ENCODE measurements at regions of chr4 and their contacts with region 1.

Region 1: GRCh38 chr4:88211473-88212252 is 53.2 kb upstream of the ABCG2 start:
- DNase-seq: peak in 6 of 7 donors; percentile 31 to 70 (median 64)
- H3K4me3 ChIP-seq: no peak overlapping the region
- H3K27ac ChIP-seq: no peak overlapping the region
- H3K4me1 ChIP-seq: peaks cover 0 to 3% of the 10 kb centered on the region in 2 donors
- H3K27me3 ChIP-seq: no peaks in the 10 kb centered on the region
- CTCF ChIP-seq: peak; percentile 56 to 86 (median 79)
- POLR2A ChIP-seq: no peak

Region 2: GRCh38 chr4:87848622-87849351 is 362.9 kb before region 1 on chr4:
- intact Hi-C with region 1: loop called (anchors 5 to 10 kb)
- DNase-seq: peak; percentile 42 to 75 (median 58)
- H3K4me3 ChIP-seq: no peak overlapping the region
- H3K27ac ChIP-seq: no peak overlapping the region
- H3K4me1 ChIP-seq: peaks cover 11 to 12% of the 10 kb centered on the region in 2 donors
- H3K27me3 ChIP-seq: no peaks in the 10 kb centered on the region
- CTCF ChIP-seq: peak in 5 of 6 experiments; percentile 30 to 64 (median 61)
- POLR2A ChIP-seq: no peak

Region 3: DNA sequence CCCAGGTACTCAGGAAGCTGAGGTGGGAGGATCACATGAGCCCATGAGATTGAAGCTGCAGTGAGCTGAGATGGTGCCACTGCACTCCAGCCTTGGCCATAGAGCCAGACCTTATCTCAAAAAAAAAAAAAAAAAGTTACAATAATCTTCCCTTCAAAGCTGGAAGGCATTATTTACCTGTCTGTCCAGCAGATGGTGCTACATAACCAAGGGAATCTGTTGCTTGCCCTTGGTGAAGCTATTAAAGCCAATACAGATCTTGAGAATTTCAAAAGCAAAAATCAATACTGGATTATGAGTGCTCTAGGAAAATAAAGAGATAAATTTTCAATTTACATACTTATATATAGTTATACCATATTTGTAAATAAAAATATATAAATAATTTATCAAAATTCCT is 178.4 kb before region 1 on chr4:
- intact Hi-C with region 1: loop called (anchors 5 to 10 kb)
- DNase-seq: peak; percentile 24 to 66 (median 59)
- H3K4me3 ChIP-seq: no peak overlapping the region
- H3K27ac ChIP-seq: no peak overlapping the region
- H3K4me1 ChIP-seq: peaks cover 11 to 12% of the 10 kb centered on the region in 2 donors
- H3K27me3 ChIP-seq: no peaks in the 10 kb centered on the region
- CTCF ChIP-seq: peak; percentile 57 to 85 (median 66)
- POLR2A ChIP-seq: no peak

Region 4: GRCh38 chr4:88378691-88379559 is 167.3 kb after region 1 on chr4 and contains the start of gene HERC6:
- intact Hi-C with region 1: loop called in 1 of 2 experiments (anchors 10 kb)
- DNase-seq: peak; percentile 79 to 94 (median 87)
- H3K4me3 ChIP-seq: peak within 1 kb of the TSS; percentile 69 to 100 (median 84)
- H3K27ac ChIP-seq: peak within 1 kb of the TSS; percentile 87 to 100 (median 94)
- H3K4me1 ChIP-seq: peaks cover 0 to 3% of the 10 kb centered on the region in 2 donors
- H3K27me3 ChIP-seq: no peaks in the 10 kb centered on the region
- CTCF ChIP-seq: peak; percentile 47 to 89 (median 73)
- POLR2A ChIP-seq: peak in 1 of 2 donors; percentile 40
- total RNA-seq, gene HERC6: 4.1 to 15.9 (median 12.4) TPM

Region 5: DNA sequence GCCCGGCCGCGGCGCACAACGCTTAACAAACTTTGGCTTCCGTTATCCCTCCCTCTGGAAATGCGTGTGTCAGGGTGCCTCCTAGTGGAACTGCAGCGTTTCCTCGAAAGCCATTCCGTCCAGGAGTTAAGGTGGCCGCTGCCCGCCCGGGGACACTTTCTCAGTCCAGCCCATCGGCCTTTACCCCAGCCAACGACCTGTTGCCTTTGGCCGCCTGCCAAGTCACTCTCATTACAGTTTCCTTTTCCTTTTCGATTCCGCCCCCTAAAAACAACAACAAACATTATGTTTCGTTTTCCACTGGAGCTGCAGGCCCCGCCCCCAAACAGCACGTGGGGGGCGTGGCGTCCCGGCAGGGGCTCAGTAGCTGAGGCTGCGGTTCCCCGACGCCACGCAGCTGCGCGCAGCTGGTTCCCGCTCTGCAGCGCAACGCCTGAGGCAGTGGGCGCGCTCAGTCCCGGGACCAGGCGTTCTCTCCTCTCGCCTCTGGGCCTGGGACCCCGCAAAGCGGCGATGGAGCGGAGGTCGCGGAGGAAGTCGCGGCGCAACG is 245.2 kb after region 1 on chr4 and contains the start of gene HERC5:
- intact Hi-C with region 1: loop called in 1 of 2 experiments (anchors 5 kb)
- DNase-seq: peak; percentile 93 to 97 (median 97)
- H3K4me3 ChIP-seq: peak within 1 kb of the TSS; percentile 50 to 87 (median 71)
- H3K27ac ChIP-seq: peak within 1 kb of the TSS; percentile 26 to 88 (median 85)
- H3K4me1 ChIP-seq: peaks cover 0 to 7% of the 10 kb centered on the region in 2 donors
- H3K27me3 ChIP-seq: no peaks in the 10 kb centered on the region
- CTCF ChIP-seq: peak; percentile 31 to 81 (median 66)
- POLR2A ChIP-seq: peak; percentile 48 to 89
- total RNA-seq, gene HERC5: 3.3 to 9.9 (median 7.0) TPM

Region 6: DNA sequence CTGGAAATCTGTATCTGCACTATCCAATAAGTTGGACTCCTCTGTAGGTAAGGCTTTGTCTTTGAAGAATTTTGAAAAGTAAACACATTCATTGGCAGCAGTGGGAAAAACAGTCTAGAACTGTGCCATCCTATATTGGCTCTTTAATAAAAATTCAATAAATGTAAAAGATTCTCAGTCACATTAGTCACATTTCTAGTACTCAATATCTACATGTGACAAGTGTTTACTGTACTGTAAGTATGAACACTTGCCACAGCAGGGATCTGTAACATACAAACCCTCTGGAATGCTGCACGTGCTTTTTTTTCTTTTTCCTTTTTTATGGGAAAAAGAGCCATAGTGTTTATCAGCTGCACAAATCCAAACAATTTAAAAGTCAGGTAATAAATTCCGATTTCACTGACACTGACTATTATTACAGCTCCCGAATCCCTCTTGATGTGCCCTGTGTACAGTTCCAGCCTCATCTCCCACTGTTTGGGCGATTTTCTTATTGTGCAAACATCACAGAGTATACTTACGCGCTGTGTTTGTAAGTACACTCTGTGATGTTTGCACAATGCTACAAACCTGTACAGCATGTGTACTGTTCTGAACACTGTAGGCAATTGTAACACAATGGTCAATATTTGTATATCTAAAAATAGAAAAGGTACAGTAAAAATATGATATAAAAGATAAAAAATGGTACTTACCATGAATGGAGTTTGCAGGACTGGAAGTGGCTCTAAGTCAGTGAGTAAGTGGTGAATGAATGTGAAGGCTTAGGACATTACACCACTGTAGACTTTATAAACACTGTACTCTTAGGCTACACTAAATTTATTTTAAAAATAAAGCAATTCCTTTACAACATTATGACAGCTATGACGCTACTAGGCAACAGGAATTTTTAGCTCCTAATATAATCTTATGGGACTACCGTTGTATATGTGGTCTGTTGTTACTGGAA is 303.2 kb after region 1 on chr4:
- intact Hi-C with region 1: loop called in 1 of 2 experiments (anchors 5 kb)
- DNase-seq: no peak
- H3K4me3 ChIP-seq: no peak overlapping the region
- H3K27ac ChIP-seq: no peak overlapping the region
- H3K4me1 ChIP-seq: no peaks in the 10 kb centered on the region
- H3K27me3 ChIP-seq: no peaks in the 10 kb centered on the region
- CTCF ChIP-seq: no peak
- POLR2A ChIP-seq: no peak